Psoas muscle (tissue), 8 donors: ENCODE measurements at regions of chr3 and their contacts with region 1.

Region 1: DNA sequence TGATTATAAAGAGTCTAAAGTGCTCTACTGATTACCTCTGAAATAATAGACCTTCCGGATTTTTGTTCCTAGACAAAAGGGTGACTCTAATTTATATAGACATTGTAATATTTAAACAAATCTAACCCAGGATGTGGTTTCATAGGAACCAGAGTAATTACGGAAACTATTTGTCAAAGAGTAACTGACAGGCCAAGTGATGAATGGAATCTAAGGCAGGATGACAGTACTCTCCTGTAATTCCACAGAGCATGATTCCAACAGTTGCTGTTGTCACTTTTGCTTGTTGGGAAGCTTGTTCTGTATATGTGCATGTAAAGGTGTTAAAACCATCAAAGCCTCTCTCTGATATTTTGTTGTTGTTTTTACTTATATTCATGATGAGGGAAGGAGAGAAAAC is 1141.0 kb downstream of the IGSF11 start:
- DNase-seq: no peak
- ATAC-seq: no peak
- H3K4me3 ChIP-seq: no peak overlapping the region
- H3K27ac ChIP-seq: no peak overlapping the region
- H3K4me1 ChIP-seq: no peaks in the 10 kb centered on the region
- H3K27me3 ChIP-seq: no peaks in the 10 kb centered on the region
- CTCF ChIP-seq: no peak

Region 2: GRCh38 chr3:116808725-116809124 is 1084.9 kb before region 1 on chr3:
- intact Hi-C with region 1: no loop called
- DNase-seq: no peak
- ATAC-seq: no peak
- H3K4me3 ChIP-seq: no peak overlapping the region
- H3K27ac ChIP-seq: no peak overlapping the region
- H3K4me1 ChIP-seq: no peaks in the 10 kb centered on the region
- H3K27me3 ChIP-seq: no peaks in the 10 kb centered on the region
- CTCF ChIP-seq: no peak

Region 3: DNA sequence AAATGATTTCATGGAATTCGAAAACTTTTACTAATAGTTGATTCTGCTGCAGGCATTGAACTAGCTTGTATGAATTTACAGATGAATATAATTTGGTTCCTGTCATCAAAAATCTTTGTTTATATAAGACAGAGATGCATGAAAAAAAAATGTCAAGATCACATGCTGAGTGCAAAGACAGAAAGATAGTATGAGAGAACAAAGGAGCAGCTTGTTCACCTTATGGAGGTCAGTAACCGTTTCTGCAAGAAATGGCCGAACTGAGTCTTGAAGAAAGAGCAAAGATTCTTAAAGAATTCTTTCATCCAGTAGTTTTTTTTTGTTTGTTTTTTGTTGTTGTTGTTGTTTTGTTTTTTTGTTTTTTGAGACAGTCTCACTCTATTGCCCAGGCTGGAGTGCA is 733.5 kb before region 1 on chr3:
- intact Hi-C with region 1: no loop called
- DNase-seq: no peak
- ATAC-seq: no peak
- H3K4me3 ChIP-seq: no peak overlapping the region
- H3K27ac ChIP-seq: no peak overlapping the region
- H3K4me1 ChIP-seq: no peaks in the 10 kb centered on the region
- H3K27me3 ChIP-seq: peaks cover 0 to 2% (median 0%) of the 10 kb centered on the region in 3 donors
- CTCF ChIP-seq: no peak

Region 4: GRCh38 chr3:117774130-117774529 is 119.5 kb before region 1 on chr3:
- intact Hi-C with region 1: no loop called
- DNase-seq: no peak
- ATAC-seq: no peak
- H3K4me3 ChIP-seq: no peak overlapping the region
- H3K27ac ChIP-seq: no peak overlapping the region
- H3K4me1 ChIP-seq: no peaks in the 10 kb centered on the region
- H3K27me3 ChIP-seq: peaks cover 0 to 2% (median 0%) of the 10 kb centered on the region in 3 donors
- CTCF ChIP-seq: no peak

Region 5: GRCh38 chr3:117871934-117872333 is 21.7 kb before region 1 on chr3:
- intact Hi-C with region 1: loop called in 1 of 2 experiments (anchors 1 kb)
- DNase-seq: no peak
- ATAC-seq: no peak
- H3K4me3 ChIP-seq: no peak overlapping the region
- H3K27ac ChIP-seq: no peak overlapping the region
- H3K4me1 ChIP-seq: no peaks in the 10 kb centered on the region
- H3K27me3 ChIP-seq: no peaks in the 10 kb centered on the region
- CTCF ChIP-seq: no peak